MCF 10A (cell line): ENCODE measurements at regions of chr6 and their contacts with region 1.

Region 1: GRCh38 chr6:127302728-127303660 is 36.3 kb downstream of the RNF146 start:
- DNase-seq: peak; percentile 55
- H3K4me3 Mint-ChIP-seq: no peak overlapping the region
- H3K27ac Mint-ChIP-seq: no peak overlapping the region
- H3K4me1 Mint-ChIP-seq: peaks cover 13% of the 10 kb centered on the region
- H3K27me3 Mint-ChIP-seq: no peaks in the 10 kb centered on the region
- CTCF ChIP-seq: peak; percentile 65

Region 2: DNA sequence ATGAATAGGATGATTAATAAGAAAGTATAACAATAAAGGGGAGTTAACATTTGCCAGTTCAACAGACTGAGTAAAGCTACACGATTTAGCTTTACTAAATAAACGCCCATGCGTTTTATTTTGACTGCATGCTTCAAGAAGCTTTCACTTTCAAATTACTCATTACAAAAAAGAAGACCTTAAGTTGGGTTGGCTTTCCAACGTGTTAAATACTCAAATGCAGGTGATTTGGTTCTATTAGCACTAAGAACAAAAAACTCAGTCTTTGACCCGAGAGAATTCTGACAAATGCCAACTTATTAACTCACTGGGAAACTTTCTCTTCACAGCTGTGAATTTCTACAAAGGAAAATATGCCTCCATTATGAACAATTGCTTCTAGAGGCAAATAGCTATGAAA is 11.5 kb before region 1 on chr6:
- CTCF ChIA-PET with region 1: interaction called, 10 read pairs
- POLR2A ChIA-PET with region 1: interaction called, 6 read pairs
- intact Hi-C with region 1: no loop called
- DNase-seq: no peak
- H3K4me3 Mint-ChIP-seq: no peak overlapping the region
- H3K27ac Mint-ChIP-seq: no peak overlapping the region
- H3K4me1 Mint-ChIP-seq: no peaks in the 10 kb centered on the region
- H3K27me3 Mint-ChIP-seq: no peaks in the 10 kb centered on the region
- CTCF ChIP-seq: no peak

Region 3: GRCh38 chr6:127342946-127343808 is 40.2 kb after region 1 on chr6 and contains the start of gene ECHDC1:
- CTCF ChIA-PET with region 1: interaction called, 6 read pairs
- POLR2A ChIA-PET with region 1: interaction called, 5 read pairs
- intact Hi-C with region 1: loop called (anchors 5 kb)
- DNase-seq: peak; percentile 70
- H3K4me3 Mint-ChIP-seq: no peak within 1 kb of the TSS
- H3K27ac Mint-ChIP-seq: no peak within 1 kb of the TSS
- H3K4me1 Mint-ChIP-seq: peaks cover 37% of the 10 kb centered on the region
- H3K27me3 Mint-ChIP-seq: no peaks in the 10 kb centered on the region
- CTCF ChIP-seq: no peak
- total RNA-seq, gene ECHDC1: 60.4 and 70.7 TPM in 2 replicates

Region 4: GRCh38 chr6:127464881-127465459 is 162.0 kb after region 1 on chr6:
- CTCF ChIA-PET with region 1: interaction called, 18 read pairs
- POLR2A ChIA-PET with region 1: no interaction called
- intact Hi-C with region 1: loop called (anchors 1 kb)
- DNase-seq: peak; percentile 68
- H3K4me3 Mint-ChIP-seq: no peak overlapping the region
- H3K27ac Mint-ChIP-seq: no peak overlapping the region
- H3K4me1 Mint-ChIP-seq: no peaks in the 10 kb centered on the region
- H3K27me3 Mint-ChIP-seq: no peaks in the 10 kb centered on the region
- CTCF ChIP-seq: peak; percentile 77

Region 5: GRCh38 chr6:127547215-127547614 is 244.2 kb after region 1 on chr6:
- CTCF ChIA-PET with region 1: interaction called, 52 read pairs
- POLR2A ChIA-PET with region 1: no interaction called
- intact Hi-C with region 1: no loop called
- DNase-seq: no peak
- H3K4me3 Mint-ChIP-seq: no peak overlapping the region
- H3K27ac Mint-ChIP-seq: no peak overlapping the region
- H3K4me1 Mint-ChIP-seq: peaks cover 6% of the 10 kb centered on the region
- H3K27me3 Mint-ChIP-seq: peaks cover 22% of the 10 kb centered on the region
- CTCF ChIP-seq: no peak